Aorta (tissue), 5 donors: ENCODE measurements at regions of chr6 and their contacts with region 1.

Region 1: GRCh38 chr6:37239950-37240713 is 17.4 kb upstream of the TBC1D22B start:
- DNase-seq: peak; percentile 97
- ATAC-seq: peak; percentile 81
- H3K4me3 ChIP-seq: no peak overlapping the region
- H3K27ac ChIP-seq: peak overlapping the region; percentile 83 to 92
- H3K4me1 ChIP-seq: peaks cover 2 to 8% of the 10 kb centered on the region in 2 donors
- H3K27me3 ChIP-seq: no peaks in the 10 kb centered on the region

Region 2: GRCh38 chr6:37137201-37138090 is 102.7 kb before region 1 on chr6:
- intact Hi-C with region 1: loop called in 1 of 2 experiments (anchors 10 kb)
- DNase-seq: peak in 1 of 2 donors; percentile 53
- ATAC-seq: peak; percentile 67
- H3K4me3 ChIP-seq: no peak overlapping the region
- H3K27ac ChIP-seq: peak overlapping the region; percentile 37 to 77
- H3K4me1 ChIP-seq: peaks cover 0 to 5% of the 10 kb centered on the region in 2 donors
- H3K27me3 ChIP-seq: no peaks in the 10 kb centered on the region

Region 3: DNA sequence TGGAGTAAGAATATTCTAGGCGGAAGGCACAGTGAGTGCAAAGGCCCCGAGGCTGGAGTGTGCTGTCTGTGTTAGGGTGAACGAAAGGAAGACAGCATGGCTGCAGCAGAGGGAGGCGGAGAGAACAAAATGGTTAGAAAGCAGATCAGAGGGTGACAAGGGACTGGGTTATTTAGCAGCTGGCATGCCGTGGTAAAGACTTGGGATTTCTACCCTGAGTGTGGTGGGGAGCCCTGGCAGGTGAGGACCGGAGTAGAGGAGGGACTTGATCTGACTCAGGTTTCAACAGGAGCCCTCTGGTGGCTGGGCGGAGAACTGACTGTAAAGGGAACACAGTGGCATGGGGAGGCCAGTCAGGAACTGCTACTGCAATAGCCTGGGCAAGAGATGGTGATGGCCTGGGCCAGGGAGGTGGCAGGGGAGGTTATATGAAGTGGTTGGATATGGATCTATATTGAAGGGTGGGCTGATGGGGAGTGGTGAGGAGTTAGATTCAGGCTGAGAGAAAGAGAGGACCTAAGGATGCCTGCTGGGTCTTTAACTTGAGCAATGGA is 32.2 kb before region 1 on chr6:
- intact Hi-C with region 1: no loop called
- DNase-seq: peak; percentile 91 to 92
- ATAC-seq: peak; percentile 69
- H3K4me3 ChIP-seq: no peak overlapping the region
- H3K27ac ChIP-seq: no peak overlapping the region
- H3K4me1 ChIP-seq: no peaks in the 10 kb centered on the region
- H3K27me3 ChIP-seq: no peaks in the 10 kb centered on the region

Region 4: DNA sequence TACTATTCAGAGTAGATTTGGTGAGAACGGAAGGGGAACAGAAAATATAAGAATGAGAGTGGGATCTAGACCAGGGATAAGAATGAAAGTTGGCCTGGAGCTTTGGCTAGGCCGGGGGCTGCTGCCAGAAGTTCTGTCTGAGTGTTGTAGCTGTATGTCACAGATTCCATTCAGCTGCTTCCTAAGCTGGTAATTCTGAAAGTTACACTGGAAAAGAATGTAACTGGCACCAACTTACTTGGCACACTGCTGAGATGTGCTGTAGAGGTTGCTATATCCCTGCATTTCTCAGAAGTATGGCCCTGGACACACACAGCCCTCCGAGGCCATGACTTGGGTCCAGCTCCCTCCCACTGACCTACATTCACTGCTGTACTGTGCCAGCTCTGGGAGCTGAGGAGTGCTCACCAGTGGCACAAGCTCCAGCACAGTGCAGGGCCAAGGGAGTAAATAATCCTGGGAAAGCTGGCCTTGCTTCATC is 43.6 kb after region 1 on chr6:
- intact Hi-C with region 1: loop called in 1 of 2 experiments (anchors 5 kb)
- DNase-seq: peak; percentile 86 to 90
- ATAC-seq: peak; percentile 93
- H3K4me3 ChIP-seq: no peak overlapping the region
- H3K27ac ChIP-seq: peak overlapping the region; percentile 64 to 76
- H3K4me1 ChIP-seq: peaks cover 0 to 4% of the 10 kb centered on the region in 2 donors
- H3K27me3 ChIP-seq: no peaks in the 10 kb centered on the region

Region 5: DNA sequence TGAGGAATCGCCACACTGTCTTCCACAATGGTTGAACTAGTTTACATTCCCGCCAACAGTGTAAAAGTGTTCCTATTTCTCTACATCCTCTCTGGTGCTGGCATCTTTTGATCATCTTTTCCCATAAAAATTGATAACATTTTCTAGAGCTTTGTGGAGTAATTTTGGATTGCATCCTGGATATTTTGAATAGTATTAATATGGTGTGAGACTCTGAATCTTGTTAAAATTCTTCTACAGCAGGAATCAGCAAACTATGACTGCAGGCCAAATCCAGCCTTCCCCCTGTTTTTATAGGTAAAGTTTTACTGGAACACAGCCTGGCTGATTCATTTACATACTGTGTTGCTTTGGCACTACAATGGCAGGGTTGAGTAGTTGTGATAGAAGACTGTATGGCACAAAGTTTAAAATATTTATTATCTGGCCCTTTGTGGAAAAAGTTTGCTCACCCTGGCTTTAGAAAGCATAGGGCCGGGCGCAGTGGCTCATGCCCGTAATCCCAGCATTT is 98.7 kb after region 1 on chr6:
- intact Hi-C with region 1: no loop called
- DNase-seq: no peak
- ATAC-seq: no peak
- H3K4me3 ChIP-seq: no peak overlapping the region
- H3K27ac ChIP-seq: no peak overlapping the region
- H3K4me1 ChIP-seq: no peaks in the 10 kb centered on the region
- H3K27me3 ChIP-seq: no peaks in the 10 kb centered on the region